ENCODE measurements at regions of chr11 and their contacts with region 1.

Region 1: GRCh38 chr11:128290106-128290840 is 297.1 kb downstream of the ETS1 start:
- DNase-seq: peak; percentile 88
- H3K4me3 ChIP-seq: no peak overlapping the region
- H3K27ac ChIP-seq: no peak overlapping the region
- H3K27me3 ChIP-seq: no peaks in the 10 kb centered on the region
- CTCF ChIP-seq: peak; percentile 87

Region 2: GRCh38 chr11:126519764-126520734 is 1770.2 kb before region 1 on chr11:
- CTCF ChIA-PET with region 1: no interaction called
- POLR2A ChIA-PET with region 1: no interaction called
- DNase-seq: no peak
- H3K4me3 ChIP-seq: no peak overlapping the region
- H3K27ac ChIP-seq: no peak overlapping the region
- H3K27me3 ChIP-seq: no peaks in the 10 kb centered on the region
- CTCF ChIP-seq: no peak

Region 3: DNA sequence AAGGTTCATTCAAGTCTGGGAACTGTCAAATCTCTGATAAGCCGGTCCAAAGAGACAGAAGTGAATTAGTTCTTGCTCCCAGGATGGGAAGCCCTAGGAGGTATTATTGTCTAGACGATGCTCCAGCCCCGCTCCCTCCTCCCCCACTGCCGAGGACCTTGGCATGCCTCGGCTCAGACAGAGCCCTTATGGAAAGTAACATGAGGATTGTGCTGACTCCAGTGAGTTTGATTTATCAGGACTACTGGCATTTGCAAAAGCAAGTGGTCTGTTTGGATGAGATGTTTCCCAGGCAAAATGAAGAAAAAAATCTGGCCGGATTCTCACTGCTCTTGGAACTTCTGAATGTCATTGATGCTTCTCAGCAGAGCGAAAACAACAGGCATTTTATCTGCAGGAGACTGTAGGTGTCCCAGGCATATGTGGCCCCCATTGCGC is 43.9 kb before region 1 on chr11:
- CTCF ChIA-PET with region 1: no interaction called
- POLR2A ChIA-PET with region 1: no interaction called
- DNase-seq: no peak
- H3K4me3 ChIP-seq: no peak overlapping the region
- H3K27ac ChIP-seq: no peak overlapping the region
- H3K27me3 ChIP-seq: no peaks in the 10 kb centered on the region
- CTCF ChIP-seq: no peak

Region 4: GRCh38 chr11:128412847-128413791 is 122.8 kb after region 1 on chr11:
- CTCF ChIA-PET with region 1: interaction called, 10 read pairs
- POLR2A ChIA-PET with region 1: no interaction called
- DNase-seq: no peak
- H3K4me3 ChIP-seq: no peak overlapping the region
- H3K27ac ChIP-seq: no peak overlapping the region
- H3K27me3 ChIP-seq: no peaks in the 10 kb centered on the region
- CTCF ChIP-seq: no peak

Region 5: DNA sequence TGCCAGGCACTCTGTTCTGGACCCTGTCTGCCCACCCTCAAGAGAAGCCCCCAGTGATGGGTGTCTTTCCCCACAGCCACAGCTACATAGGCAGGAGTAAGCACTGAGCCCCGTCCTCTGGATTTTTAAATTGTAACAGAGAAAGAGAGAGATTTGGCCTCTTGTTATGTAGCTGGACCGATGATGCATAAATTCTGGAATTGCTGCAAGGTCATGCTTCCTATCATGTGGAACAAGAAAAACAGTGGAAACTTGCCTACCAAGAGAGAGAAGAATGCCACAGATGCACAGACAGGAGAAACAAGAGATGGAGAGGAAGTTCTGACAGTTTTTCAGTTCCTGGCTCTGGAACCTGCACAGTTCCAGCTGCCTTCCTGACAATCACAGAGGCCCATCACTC is 146.9 kb after region 1 on chr11:
- CTCF ChIA-PET with region 1: no interaction called
- POLR2A ChIA-PET with region 1: no interaction called
- DNase-seq: no peak
- H3K4me3 ChIP-seq: no peak overlapping the region
- H3K27ac ChIP-seq: peak overlapping the region; percentile 33
- H3K27me3 ChIP-seq: no peaks in the 10 kb centered on the region
- CTCF ChIP-seq: no peak

Region 6: DNA sequence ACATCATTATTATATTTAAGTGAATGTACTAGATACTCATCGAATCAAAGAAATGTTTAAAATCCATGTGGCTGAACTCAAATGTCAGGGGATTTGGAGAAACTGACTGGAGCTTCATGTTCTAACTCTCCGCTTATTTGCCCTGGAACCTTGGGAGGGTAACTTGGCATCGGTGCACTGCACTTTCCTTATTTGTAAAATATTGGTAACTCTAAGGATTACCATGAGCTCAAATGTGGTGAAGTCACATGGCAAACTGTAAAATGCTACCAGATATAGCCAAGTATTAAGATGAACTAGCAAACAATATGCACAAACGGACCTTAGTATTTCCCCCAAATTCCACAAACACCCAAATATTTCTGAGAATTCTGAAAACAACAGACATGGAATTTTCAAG is 221.4 kb after region 1 on chr11:
- CTCF ChIA-PET with region 1: no interaction called
- POLR2A ChIA-PET with region 1: no interaction called
- DNase-seq: no peak
- H3K4me3 ChIP-seq: no peak overlapping the region
- H3K27ac ChIP-seq: no peak overlapping the region
- H3K27me3 ChIP-seq: no peaks in the 10 kb centered on the region
- CTCF ChIP-seq: no peak

Region 7: DNA sequence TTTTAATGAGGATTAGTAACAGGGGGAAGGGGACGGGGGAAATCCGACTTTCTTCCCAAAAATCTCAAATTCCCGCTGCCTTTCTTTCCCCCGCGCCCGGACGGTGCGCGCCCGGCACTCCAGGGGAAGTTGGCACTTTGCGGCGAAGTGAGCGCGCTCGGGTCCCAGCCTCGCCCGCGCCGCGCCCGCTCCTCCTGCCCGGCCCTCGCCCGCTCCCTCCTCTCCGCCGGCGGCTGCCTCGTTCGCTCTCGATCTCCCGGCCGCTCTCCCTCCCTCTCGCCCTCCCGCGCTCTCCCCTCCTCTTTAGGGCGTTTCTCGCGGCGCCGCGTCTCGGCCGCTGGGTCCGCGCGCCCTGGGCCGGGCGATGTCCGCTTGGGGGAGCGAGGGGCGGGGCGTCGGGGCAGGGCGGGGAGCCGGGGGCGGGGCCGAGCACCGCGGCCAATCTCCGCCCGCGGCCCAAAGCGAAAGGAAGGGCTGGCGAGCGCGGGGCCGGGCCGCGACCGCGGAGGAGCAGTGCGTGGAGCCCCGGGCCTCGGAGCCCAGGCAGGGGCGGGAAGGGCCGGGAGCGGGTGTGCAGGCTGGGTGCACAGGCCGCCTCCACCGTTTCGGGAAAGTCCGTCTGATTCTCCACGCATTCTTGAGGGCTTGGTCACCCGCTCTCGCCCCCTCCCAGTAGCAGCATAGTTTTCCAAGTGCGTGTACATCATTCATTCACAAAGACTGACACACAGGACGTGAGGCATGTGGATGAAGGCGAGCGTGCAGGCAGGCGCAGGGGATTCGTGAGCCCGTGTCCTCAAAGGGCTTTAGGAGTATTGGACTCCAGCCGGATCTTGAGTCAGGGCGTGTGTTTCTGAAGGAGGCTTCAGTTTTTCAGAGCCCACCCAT is 232.0 kb after region 1 on chr11:
- CTCF ChIA-PET with region 1: interaction called, 16 read pairs
- POLR2A ChIA-PET with region 1: interaction called, 3 read pairs
- DNase-seq: peak; percentile 98
- H3K4me3 ChIP-seq: peak overlapping the region; percentile 86
- H3K27ac ChIP-seq: peak overlapping the region; percentile 99
- H3K27me3 ChIP-seq: no peaks in the 10 kb centered on the region
- CTCF ChIP-seq: no peak